Activated CD8-positive, alpha-beta T cell treated with anti-CD3 and anti-CD28 coated beads, Interleukin-2, amount 10 ng/mL, durations not matched to agents 7 days and 5 days (primary cell): ENCODE measurements at regions of chr9 and their contacts with region 1.

Region 1: GRCh38 chr9:114653556-114654159 is 3.9 kb downstream of the TEX53 start:
- DNase-seq: peak; percentile 92
- ATAC-seq: peak; percentile 84
- H3K4me3 Mint-ChIP-seq: no peak overlapping the region
- H3K27ac Mint-ChIP-seq: peak overlapping the region; percentile 70
- H3K4me1 Mint-ChIP-seq: peaks cover 19% of the 10 kb centered on the region
- H3K27me3 Mint-ChIP-seq: no peaks in the 10 kb centered on the region

Region 2: DNA sequence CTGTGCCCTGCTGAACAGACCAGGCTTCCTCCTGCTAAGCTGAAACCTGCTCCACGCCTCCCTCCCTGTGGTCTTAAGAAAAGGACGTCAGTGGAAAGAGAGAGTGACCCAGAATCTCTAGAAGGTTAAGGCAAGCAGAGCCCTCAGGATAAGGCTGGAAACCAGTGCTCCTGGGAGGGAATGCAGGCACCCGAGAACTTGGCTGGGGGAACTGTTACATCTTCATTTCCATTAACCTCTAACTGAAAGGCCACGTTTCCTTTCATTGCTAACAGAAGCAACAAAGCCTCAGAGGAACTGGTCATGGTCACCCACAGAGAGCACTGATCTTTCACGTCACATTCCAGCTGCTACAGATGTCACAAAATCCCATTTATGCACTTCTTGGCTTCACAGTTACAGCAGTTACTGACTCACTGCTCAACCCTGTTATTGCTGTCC is 239.8 kb before region 1 on chr9:
- CTCF ChIA-PET with region 1: interaction called, 292 read pairs
- POLR2A ChIA-PET with region 1: interaction called, 3 read pairs
- DNase-seq: no peak
- ATAC-seq: no peak
- H3K4me3 Mint-ChIP-seq: no peak overlapping the region
- H3K27ac Mint-ChIP-seq: no peak overlapping the region
- H3K4me1 Mint-ChIP-seq: peaks cover 19% of the 10 kb centered on the region
- H3K27me3 Mint-ChIP-seq: no peaks in the 10 kb centered on the region

Region 3: DNA sequence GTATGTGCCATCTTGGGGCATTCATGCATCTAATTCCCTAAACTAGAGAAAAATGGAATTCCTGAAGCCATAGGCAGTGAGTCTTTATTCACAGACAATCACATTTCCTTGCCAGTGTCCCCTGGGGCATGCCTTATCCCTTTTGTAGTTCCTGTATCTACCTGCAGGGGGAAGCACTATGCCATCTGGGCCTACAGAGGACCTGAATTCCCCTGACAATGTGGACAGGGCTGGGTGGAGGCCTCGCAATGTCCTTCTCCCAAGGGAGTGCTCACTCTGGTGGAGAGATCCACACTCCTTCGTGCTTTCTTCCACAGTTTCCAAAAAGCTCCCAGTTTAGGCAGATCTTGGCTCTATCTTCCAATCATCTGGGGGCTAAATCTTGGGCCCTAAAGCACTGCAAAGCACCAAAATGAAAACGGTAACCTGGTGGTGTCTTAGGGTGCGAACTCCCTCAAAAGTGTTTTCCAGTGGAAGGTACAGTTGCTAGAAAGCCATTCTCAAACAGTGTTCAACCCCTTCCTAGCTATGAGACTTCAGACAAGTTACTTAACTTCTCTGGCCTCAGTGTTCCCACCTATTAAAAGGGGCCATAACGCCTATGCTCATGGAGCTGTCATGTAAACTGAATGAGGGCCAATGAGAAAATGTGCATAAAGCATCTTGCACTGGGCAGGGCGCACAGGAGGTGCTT is 165.9 kb before region 1 on chr9:
- CTCF ChIA-PET with region 1: interaction called, 115 read pairs
- POLR2A ChIA-PET with region 1: interaction called, 3 read pairs
- DNase-seq: peak; percentile 76
- ATAC-seq: peak; percentile 73
- H3K4me3 Mint-ChIP-seq: no peak overlapping the region
- H3K27ac Mint-ChIP-seq: no peak overlapping the region
- H3K4me1 Mint-ChIP-seq: peaks cover 26% of the 10 kb centered on the region
- H3K27me3 Mint-ChIP-seq: no peaks in the 10 kb centered on the region

Region 4: DNA sequence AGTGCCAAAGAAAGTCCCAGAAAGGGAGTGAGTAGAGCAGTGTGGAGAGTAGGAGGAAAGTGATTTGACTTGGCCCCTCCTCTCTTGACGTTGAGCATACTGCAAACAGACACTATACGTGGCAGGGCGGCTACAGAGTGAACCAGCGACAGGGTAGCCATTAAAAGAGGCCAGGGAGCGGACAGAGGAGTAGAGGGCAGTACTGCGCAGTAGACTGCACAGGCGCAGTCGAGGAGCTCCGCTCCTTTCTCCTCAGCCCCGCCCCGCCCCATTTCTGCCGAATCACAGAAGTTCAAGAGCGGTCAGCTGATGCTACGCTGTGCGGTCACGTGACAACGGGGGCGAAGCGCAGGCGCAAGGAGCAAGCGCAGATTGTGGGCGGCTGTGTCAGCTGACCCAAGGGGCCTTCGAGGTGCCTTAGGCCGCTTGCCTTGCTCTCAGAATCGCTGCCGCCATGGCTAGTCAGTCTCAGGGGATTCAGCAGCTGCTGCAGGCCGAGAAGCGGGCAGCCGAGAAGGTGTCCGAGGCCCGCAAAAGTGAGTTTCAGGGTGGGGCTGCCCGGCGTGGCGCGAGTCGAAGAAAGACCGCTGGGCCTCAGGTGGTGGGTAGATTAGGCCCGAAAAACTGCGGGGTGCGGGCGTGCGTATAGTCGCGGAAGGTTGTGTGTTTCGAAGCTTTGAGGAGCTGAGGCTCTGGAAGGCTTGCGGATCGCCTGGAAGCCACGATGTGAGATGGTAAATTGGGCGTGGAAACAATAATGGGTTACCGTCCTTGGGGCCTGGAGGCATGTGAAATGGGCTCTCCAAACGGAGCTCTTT is 66.1 kb before region 1 on chr9 and contains the start of gene ATP6V1G1:
- CTCF ChIA-PET with region 1: interaction called, 269 read pairs
- POLR2A ChIA-PET with region 1: interaction called, 27 read pairs
- DNase-seq: peak; percentile 100
- ATAC-seq: peak; percentile 96
- H3K4me3 Mint-ChIP-seq: peak within 1 kb of the TSS; percentile 100
- H3K27ac Mint-ChIP-seq: peak within 1 kb of the TSS; percentile 98
- H3K4me1 Mint-ChIP-seq: peaks cover 45% of the 10 kb centered on the region
- H3K27me3 Mint-ChIP-seq: peaks cover 4% of the 10 kb centered on the region
- total RNA-seq, gene ATP6V1G1: 79.2 to 82.0 TPM

Region 5: GRCh38 chr9:114629563-114630090 is 24.0 kb before region 1 on chr9:
- CTCF ChIA-PET with region 1: interaction called, 17 read pairs
- POLR2A ChIA-PET with region 1: no interaction called
- DNase-seq: no peak
- ATAC-seq: no peak
- H3K4me3 Mint-ChIP-seq: no peak overlapping the region
- H3K27ac Mint-ChIP-seq: peak overlapping the region; percentile 43
- H3K4me1 Mint-ChIP-seq: no peaks in the 10 kb centered on the region
- H3K27me3 Mint-ChIP-seq: no peaks in the 10 kb centered on the region

Region 6: DNA sequence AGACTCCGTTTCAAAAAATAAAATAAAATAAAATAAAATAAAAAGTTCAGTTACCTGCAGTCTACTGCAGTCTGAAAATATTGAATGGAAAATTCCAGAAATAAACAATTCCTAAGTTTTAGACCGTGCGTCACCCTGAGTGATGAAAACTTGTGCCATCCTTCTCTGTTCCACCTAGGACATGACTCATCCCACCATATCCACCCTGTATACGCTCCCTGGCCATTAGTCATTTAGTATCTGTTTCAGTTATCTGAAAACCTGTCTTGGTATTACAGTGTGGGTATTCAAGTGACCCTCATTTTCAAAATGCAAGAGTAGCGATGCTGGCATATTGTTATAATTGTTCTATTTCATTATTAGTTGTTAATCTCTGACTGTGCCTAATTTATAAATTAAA is 80.2 kb after region 1 on chr9:
- CTCF ChIA-PET with region 1: no interaction called
- POLR2A ChIA-PET with region 1: no interaction called
- DNase-seq: no peak
- ATAC-seq: no peak
- H3K4me3 Mint-ChIP-seq: no peak overlapping the region
- H3K27ac Mint-ChIP-seq: no peak overlapping the region
- H3K4me1 Mint-ChIP-seq: peaks cover 46% of the 10 kb centered on the region
- H3K27me3 Mint-ChIP-seq: no peaks in the 10 kb centered on the region